Gastrocnemius medialis (tissue), 4 donors: ENCODE measurements at regions of chr11 and their contacts with region 1.

Region 1: GRCh38 chr11:8070417-8071115 is 10.4 kb upstream of the TUB start:
- DNase-seq: no peak
- ATAC-seq: peak in 1 of 2 donors; percentile 45
- H3K4me3 ChIP-seq: no peak overlapping the region
- H3K27ac ChIP-seq: no peak overlapping the region
- H3K4me1 ChIP-seq: peaks cover 13 to 15% of the 10 kb centered on the region in 2 donors
- H3K27me3 ChIP-seq: no peaks in the 10 kb centered on the region
- CTCF ChIP-seq: peak in 3 of 5 experiments; percentile 5 to 29 (median 11)
- POLR2A ChIP-seq: no peak

Region 2: GRCh38 chr11:8033305-8034105 is 37.1 kb before region 1 on chr11:
- in situ Hi-C with region 1: no loop called
- intact Hi-C with region 1: loop called (anchors 1 kb)
- DNase-seq: peak; percentile 40 to 66
- ATAC-seq: peak; percentile 79 to 90
- H3K4me3 ChIP-seq: no peak overlapping the region
- H3K27ac ChIP-seq: no peak overlapping the region
- H3K4me1 ChIP-seq: no peaks in the 10 kb centered on the region
- H3K27me3 ChIP-seq: no peaks in the 10 kb centered on the region
- CTCF ChIP-seq: peak; percentile 77 to 91 (median 87)
- POLR2A ChIP-seq: no peak

Region 3: DNA sequence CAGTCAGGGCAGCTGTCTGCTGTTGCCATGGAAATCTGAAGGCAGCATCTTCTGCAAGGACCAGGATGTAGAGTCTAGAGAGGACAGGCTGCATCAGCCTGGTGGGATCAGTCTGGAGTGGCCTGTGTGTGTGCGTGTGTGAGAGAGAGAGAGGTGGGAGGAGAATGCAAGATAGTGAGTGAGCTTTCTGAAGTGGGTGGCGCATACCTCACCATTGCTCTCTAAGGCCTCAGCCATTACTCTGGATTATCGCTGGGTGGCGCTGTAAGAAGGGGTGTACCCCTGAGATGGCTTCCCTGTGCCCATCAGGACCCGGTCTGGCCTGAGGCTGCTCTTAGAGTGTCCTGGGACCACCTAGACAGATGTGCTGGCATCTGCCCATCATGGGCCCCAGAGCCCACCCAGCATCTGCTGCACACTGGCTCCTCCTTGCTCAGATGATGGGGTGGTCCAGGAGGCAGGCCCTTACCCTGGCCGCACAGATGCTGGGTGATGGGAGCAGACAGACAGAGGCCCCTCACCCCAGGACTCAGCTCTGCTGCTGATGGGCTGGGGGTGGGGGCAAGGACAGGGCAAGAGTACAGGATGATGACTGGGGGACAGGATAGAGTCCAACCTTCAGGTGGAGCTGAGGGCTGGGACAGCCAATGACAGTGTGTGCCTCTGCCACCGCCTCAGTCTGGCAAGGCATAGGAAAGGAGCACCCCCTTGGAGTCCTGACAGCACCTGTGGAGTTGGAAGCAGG is 15.3 kb before region 1 on chr11:
- in situ Hi-C with region 1: no loop called
- intact Hi-C with region 1: loop called (anchors 2 kb)
- DNase-seq: no peak
- ATAC-seq: no peak
- H3K4me3 ChIP-seq: no peak overlapping the region
- H3K27ac ChIP-seq: no peak overlapping the region
- H3K4me1 ChIP-seq: no peaks in the 10 kb centered on the region
- H3K27me3 ChIP-seq: no peaks in the 10 kb centered on the region
- CTCF ChIP-seq: no peak
- POLR2A ChIP-seq: no peak